ENCODE measurements at regions of chr16 and their contacts with region 1.

Region 1: GRCh38 chr16:48365581-48366164 is 19.5 kb downstream of the SIAH1 start:
- DNase-seq: peak; percentile 80
- H3K4me3 Mint-ChIP-seq: peak overlapping the region; percentile 90
- H3K27ac Mint-ChIP-seq: peak overlapping the region; percentile 96
- H3K4me1 Mint-ChIP-seq: peaks cover 59% of the 10 kb centered on the region
- H3K27me3 Mint-ChIP-seq: no peaks in the 10 kb centered on the region

Region 2: DNA sequence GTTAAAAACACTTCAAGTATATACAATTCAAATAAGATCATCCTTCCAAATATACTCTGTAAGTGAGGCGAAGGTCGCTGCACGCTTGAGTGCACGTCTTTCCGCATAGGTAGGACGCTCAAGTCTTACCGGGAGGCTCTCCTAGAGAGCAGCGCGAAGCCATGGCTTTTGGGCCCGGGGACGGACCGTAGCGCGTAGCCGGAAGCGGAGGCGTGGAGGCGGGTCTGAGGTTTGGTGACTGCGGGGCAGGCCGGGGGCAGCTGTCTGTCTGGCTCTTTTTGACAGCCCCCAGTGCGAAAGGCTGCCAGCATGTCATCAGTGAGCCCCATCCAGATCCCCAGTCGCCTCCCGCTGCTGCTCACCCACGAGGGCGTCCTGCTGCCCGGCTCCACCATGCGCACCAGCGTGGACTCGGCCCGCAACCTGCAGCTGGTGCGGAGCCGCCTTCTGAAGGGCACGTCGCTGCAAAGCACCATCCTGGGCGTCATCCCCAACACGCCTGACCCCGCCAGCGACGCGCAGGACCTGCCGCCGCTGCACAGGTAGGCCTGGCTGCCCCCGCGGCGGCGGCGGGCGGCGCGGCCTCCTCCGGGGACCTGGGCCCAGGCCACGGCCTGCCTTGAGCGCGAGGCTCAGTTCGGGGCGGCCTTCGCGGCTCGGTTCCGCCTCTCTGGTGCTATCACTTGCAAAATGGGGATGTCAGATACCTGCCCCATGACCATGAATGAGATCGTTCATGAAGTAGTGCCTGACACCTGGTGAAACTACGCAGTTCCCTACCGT is 121.4 kb before region 1 on chr16 and contains the start of gene LONP2:
- intact Hi-C with region 1: loop called (anchors 5 kb)
- DNase-seq: peak; percentile 90
- H3K4me3 Mint-ChIP-seq: peak within 1 kb of the TSS; percentile 92
- H3K27ac Mint-ChIP-seq: peak within 1 kb of the TSS; percentile 93
- H3K4me1 Mint-ChIP-seq: peaks cover 27% of the 10 kb centered on the region
- H3K27me3 Mint-ChIP-seq: peaks cover 2% of the 10 kb centered on the region
- total RNA-seq, gene LONP2: 52.2 and 55.7 TPM in 2 replicates

Region 3: DNA sequence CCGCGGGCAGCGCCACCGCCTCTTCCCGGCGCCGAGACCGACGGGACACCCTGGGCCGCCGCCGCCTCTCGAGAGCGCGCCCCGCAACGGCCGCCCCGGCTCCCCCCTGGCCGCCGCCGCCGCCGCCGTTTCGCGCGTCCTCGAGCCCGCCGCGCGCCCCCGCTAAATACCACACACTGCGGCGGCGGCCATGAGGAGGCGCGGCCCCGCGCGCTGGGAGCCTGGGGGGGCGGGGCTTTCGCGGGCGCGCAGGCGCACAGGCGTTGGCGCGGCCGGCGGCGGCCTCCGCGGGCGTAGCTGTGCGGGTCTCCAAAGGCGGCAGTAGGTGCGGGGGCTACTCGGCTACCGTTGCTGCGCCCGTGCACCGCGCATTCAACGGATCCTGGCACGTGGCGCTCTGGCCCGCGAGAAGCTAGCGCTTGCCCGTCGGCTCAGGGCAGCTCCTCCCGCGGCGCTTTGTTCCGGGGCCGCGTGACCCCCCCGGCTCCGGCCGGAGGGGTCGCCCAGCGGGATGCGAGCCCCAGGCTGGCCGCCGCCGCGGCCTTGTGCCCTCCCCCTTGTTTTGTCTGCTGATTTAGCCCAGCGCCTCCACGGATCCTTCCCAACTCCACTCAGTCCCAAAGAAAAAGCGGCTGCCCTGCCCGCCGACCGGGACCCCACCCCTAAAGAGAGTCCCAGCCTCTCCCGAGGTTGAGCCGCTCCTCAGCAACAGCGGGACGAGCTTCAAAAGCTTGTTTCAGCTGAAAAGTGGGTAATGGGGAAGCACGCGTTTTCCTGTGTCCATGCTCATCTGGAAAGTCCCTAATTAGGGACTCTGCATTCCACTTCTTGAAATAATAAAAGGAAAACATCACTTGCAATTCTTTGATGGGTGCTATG is 19.8 kb after region 1 on chr16 and contains the start of gene SIAH1:
- intact Hi-C with region 1: loop called (anchors 1 kb)
- DNase-seq: peak; percentile 85
- H3K4me3 Mint-ChIP-seq: peak within 1 kb of the TSS; percentile 97
- H3K27ac Mint-ChIP-seq: peak within 1 kb of the TSS; percentile 95
- H3K4me1 Mint-ChIP-seq: peaks cover 29% of the 10 kb centered on the region
- H3K27me3 Mint-ChIP-seq: peaks cover 3% of the 10 kb centered on the region
- total RNA-seq, gene SIAH1: 15.6 and 16.8 TPM in 2 replicates

Region 4: GRCh38 chr16:48632137-48632774 is 266.6 kb after region 1 on chr16:
- intact Hi-C with region 1: loop called (anchors 1 kb)
- DNase-seq: no peak
- H3K4me3 Mint-ChIP-seq: no peak overlapping the region
- H3K27ac Mint-ChIP-seq: no peak overlapping the region
- H3K4me1 Mint-ChIP-seq: peaks cover 11% of the 10 kb centered on the region
- H3K27me3 Mint-ChIP-seq: peaks cover 11% of the 10 kb centered on the region

Region 5: GRCh38 chr16:50065624-50066481 is 1700.2 kb after region 1 on chr16 and contains the start of gene HEATR3:
- intact Hi-C with region 1: loop called (anchors 10 kb)
- DNase-seq: peak; percentile 93
- H3K4me3 Mint-ChIP-seq: peak within 1 kb of the TSS; percentile 85
- H3K27ac Mint-ChIP-seq: peak within 1 kb of the TSS; percentile 90
- H3K4me1 Mint-ChIP-seq: peaks cover 39% of the 10 kb centered on the region
- H3K27me3 Mint-ChIP-seq: no peaks in the 10 kb centered on the region
- total RNA-seq, gene HEATR3: 29.1 and 30.7 TPM in 2 replicates